ENCODE measurements at regions of chr16 and their contacts with region 1.

Region 1: GRCh38 chr16:49592546-49593423 is 219.2 kb downstream of the C16orf78 start:
- DNase-seq: peak; percentile 75
- H3K4me3 Mint-ChIP-seq: no peak overlapping the region
- H3K27ac Mint-ChIP-seq: no peak overlapping the region
- H3K4me1 Mint-ChIP-seq: peaks cover 2% of the 10 kb centered on the region
- H3K27me3 Mint-ChIP-seq: peaks cover 18% of the 10 kb centered on the region

Region 2: GRCh38 chr16:49407873-49408550 is 184.8 kb before region 1 on chr16:
- intact Hi-C with region 1: loop called (anchors 2 kb)
- DNase-seq: peak; percentile 89
- H3K4me3 Mint-ChIP-seq: no peak overlapping the region
- H3K27ac Mint-ChIP-seq: no peak overlapping the region
- H3K4me1 Mint-ChIP-seq: peaks cover 3% of the 10 kb centered on the region
- H3K27me3 Mint-ChIP-seq: peaks cover 3% of the 10 kb centered on the region

Region 3: GRCh38 chr16:49620158-49620868 is 27.5 kb after region 1 on chr16:
- intact Hi-C with region 1: no loop called
- DNase-seq: no peak
- H3K4me3 Mint-ChIP-seq: no peak overlapping the region
- H3K27ac Mint-ChIP-seq: no peak overlapping the region
- H3K4me1 Mint-ChIP-seq: no peaks in the 10 kb centered on the region
- H3K27me3 Mint-ChIP-seq: no peaks in the 10 kb centered on the region

Measured in activated CD4-positive, alpha-beta T cell treated with anti-CD3 and anti-CD28 coated beads, Interleukin-2, amount 10 ng/mL, durations not matched to agents 24 days and 14 days (primary cell).